GM10248 (cell line): ENCODE measurements at regions of chr2 and their contacts with region 1.

Region 1: DNA sequence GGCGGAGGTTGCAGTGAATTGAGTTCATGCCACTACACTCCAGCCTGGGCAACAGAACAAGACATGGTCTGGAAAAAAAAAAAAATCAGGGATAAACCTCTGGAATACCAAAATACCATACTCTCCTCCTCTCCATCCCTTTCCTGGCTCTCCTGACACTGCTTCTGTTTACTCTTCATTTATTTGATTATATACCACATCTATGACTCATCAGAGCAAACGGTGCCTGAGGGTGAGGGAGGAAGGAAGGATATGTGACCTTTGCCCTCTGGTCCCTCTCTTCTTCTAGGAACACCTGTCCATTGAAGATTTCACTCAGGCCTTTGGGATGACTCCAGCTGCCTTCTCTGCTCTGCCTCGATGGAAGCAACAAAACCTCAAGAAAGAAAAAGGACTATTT is 30.0 kb downstream of the VIL1 start:
- DNase-seq: no peak
- CTCF ChIP-seq: no peak

Region 2: GRCh38 chr2:218422403-218423086 is 26.4 kb before region 1 on chr2:
- CTCF ChIA-PET with region 1: no interaction called
- POLR2A ChIA-PET with region 1: no interaction called
- DNase-seq: no peak
- CTCF ChIP-seq: no peak

Region 3: DNA sequence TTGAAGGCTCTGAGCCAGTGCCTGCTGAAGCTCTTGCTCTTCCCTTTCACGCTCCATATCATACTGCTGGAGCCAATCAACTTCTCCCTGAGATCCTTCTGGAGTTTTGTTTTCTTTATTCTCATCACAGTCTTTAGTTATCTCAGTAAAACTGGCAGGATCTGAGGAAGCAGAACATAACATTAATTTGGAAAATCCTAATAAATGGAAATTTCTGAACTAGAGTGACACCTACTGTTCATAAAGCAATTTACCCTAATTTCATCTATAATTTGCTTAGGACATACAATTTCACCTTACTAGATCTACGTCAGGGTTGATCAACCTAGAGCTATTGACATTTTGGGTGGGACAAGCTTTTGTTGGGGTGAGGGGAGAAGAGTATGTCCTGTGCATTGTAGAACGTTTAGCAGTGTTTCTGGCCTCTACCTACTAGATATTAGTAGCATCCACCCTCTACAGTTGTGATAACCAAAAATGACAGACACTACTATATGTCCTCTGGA is 17.1 kb after region 1 on chr2:
- CTCF ChIA-PET with region 1: interaction called, 10 read pairs
- POLR2A ChIA-PET with region 1: no interaction called
- DNase-seq: no peak
- CTCF ChIP-seq: peak; percentile 18